Activated naive CD4-positive, alpha-beta T cell treated with anti-CD3 and anti-CD28 coated beads for 36 hours (primary cell): ENCODE measurements at regions of chr9 and their contacts with region 1.

Region 1: DNA sequence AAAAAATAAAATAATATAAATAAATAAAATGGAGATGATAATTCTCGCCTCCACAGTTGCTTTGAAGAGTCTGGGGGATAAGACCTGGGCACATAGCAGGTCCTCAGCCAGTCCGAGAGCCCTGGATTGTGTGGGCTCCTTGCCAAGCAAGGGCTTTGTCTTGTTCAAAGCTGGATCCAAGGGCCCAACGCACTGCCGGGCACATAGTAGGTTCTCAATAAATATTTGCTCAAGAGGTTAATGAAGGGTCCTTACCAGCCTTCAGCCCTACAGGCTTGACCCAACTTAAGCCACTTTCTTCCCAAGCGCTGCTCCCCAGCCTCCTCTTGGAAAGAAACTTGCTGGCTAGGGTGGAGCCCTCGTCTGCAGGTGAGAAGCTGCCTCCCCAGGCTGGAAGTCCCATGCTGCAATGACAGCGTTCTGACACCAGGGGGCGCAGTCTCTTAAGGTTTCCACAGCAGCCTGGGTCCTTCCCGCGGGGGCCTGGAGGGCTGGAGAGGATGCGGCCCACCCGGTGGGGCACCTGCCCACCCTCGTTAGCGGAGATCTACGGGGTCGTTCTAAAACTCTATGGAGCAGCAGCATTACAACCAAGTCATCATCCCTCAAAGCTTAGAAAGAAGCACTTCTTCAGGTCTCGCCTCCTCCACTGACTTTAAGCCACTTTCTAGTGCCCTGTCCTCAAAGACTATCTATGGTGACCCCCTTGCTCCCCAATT is 115.2 kb downstream of the LHX2 start:
- DNase-seq: peak; percentile 85
- H3K4me3 Mint-ChIP-seq: no peak overlapping the region
- H3K27ac Mint-ChIP-seq: no peak overlapping the region
- H3K4me1 Mint-ChIP-seq: no peaks in the 10 kb centered on the region
- H3K27me3 Mint-ChIP-seq: peaks cover 4% of the 10 kb centered on the region

Region 2: DNA sequence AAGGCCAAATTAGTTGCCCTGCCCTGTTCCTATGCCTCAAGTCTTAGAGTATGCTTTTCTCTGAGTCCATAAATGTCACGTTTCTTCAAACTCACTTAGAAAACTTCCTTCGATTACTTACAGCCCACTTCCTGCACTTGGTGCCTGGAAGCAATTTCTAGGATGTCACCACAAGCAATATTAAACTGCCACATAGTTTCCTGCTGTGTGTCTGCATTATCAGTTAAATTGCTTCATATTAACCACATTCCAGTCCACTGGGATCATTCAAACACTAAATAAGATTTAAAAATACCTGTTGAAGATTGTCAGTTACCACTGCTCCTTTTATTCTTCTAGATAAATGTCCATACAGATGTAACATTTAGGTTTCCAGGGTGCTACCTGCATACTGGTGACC is 200.9 kb before region 1 on chr9:
- CTCF ChIA-PET with region 1: no interaction called
- intact Hi-C with region 1: no loop called
- DNase-seq: no peak
- H3K4me3 Mint-ChIP-seq: no peak overlapping the region
- H3K27ac Mint-ChIP-seq: no peak overlapping the region
- H3K4me1 Mint-ChIP-seq: peaks cover 42% of the 10 kb centered on the region
- H3K27me3 Mint-ChIP-seq: no peaks in the 10 kb centered on the region

Region 3: GRCh38 chr9:124202447-124202971 is 75.8 kb after region 1 on chr9:
- CTCF ChIA-PET with region 1: interaction called, 3 read pairs
- intact Hi-C with region 1: loop called (anchors 2 kb)
- DNase-seq: peak; percentile 94
- H3K4me3 Mint-ChIP-seq: peak overlapping the region; percentile 25
- H3K27ac Mint-ChIP-seq: peak overlapping the region; percentile 84
- H3K4me1 Mint-ChIP-seq: peaks cover 32% of the 10 kb centered on the region
- H3K27me3 Mint-ChIP-seq: no peaks in the 10 kb centered on the region

Region 4: GRCh38 chr9:124320062-124320973 is 193.6 kb after region 1 on chr9:
- CTCF ChIA-PET with region 1: interaction called, 14 read pairs
- intact Hi-C with region 1: loop called (anchors 2 kb)
- DNase-seq: peak; percentile 66
- H3K4me3 Mint-ChIP-seq: no peak overlapping the region
- H3K27ac Mint-ChIP-seq: no peak overlapping the region
- H3K4me1 Mint-ChIP-seq: no peaks in the 10 kb centered on the region
- H3K27me3 Mint-ChIP-seq: no peaks in the 10 kb centered on the region

Region 5: GRCh38 chr9:124394596-124394995 is 267.9 kb after region 1 on chr9:
- CTCF ChIA-PET with region 1: interaction called, 5 read pairs
- intact Hi-C with region 1: loop called (anchors 1 kb)
- DNase-seq: no peak
- H3K4me3 Mint-ChIP-seq: no peak overlapping the region
- H3K27ac Mint-ChIP-seq: no peak overlapping the region
- H3K4me1 Mint-ChIP-seq: peaks cover 61% of the 10 kb centered on the region
- H3K27me3 Mint-ChIP-seq: no peaks in the 10 kb centered on the region